CD4-positive, alpha-beta T cell (primary cell): ENCODE measurements at regions of chr19 and their contacts with region 1.

Region 1: GRCh38 chr19:15288146-15288963 is 44.0 kb downstream of the BRD4 start:
- DNase-seq: peak in 1 of 14 experiments; percentile 24
- ATAC-seq: peak; percentile 23
- H3K4me3 ChIP-seq: no peak overlapping the region
- H3K4me3 Mint-ChIP-seq: peak overlapping the region; percentile 68
- H3K27ac ChIP-seq: no peak overlapping the region
- H3K27ac Mint-ChIP-seq: peak overlapping the region; percentile 75
- H3K4me1 ChIP-seq: peaks cover 96% of the 10 kb centered on the region
- H3K4me1 Mint-ChIP-seq: peaks cover 100% of the 10 kb centered on the region
- H3K27me3 ChIP-seq: no peaks in the 10 kb centered on the region
- H3K27me3 Mint-ChIP-seq: no peaks in the 10 kb centered on the region
- CTCF ChIP-seq: no peak

Region 2: DNA sequence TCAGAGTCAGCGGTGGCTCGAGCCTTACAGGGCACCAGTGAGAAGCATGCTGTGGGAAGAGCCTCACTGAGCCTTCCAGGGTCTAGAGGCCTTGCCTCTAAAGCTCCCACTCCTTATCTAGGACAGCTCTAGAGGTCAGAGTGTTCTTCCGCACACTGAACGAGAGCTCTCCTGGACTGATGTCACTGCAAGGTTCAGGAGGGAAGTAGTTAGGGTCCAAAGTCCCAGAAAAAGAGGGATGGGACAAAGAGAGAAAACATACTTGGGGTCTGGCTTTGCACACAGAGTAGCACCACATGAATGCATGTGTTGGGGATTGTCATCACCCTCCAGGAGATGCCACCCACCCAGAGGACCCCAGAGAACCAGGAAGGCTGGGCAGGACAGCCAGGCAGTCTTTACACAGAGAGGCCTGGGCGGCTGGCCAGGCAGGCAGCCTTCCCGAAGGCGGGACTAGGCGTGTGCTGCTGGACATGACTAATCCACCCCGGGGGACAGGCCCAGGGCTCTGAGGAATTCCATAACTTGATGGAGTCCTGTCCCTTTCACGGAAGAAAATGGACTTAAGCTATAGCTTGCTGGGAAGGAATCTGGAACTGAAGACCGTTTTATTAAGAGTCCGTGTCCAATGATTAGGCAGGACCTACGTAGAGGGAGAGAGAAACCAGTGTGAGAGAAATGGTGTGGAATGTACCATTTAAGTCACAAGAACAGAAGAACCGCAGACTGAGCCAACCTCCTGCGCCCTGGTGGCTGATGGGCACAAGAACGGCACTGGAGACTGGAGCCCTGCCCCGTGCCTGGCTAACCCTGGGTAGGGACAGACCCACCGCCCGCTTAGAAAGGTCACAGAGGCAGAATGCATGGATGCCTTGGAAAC is 39.5 kb before region 1 on chr19:
- CTCF ChIA-PET with region 1: no interaction called
- POLR2A ChIA-PET with region 1: no interaction called
- intact Hi-C with region 1: no loop called
- DNase-seq: no peak
- ATAC-seq: no peak
- H3K4me3 ChIP-seq: no peak overlapping the region
- H3K4me3 Mint-ChIP-seq: no peak overlapping the region
- H3K27ac ChIP-seq: no peak overlapping the region
- H3K27ac Mint-ChIP-seq: no peak overlapping the region
- H3K4me1 ChIP-seq: no peaks in the 10 kb centered on the region
- H3K4me1 Mint-ChIP-seq: no peaks in the 10 kb centered on the region
- H3K27me3 ChIP-seq: no peaks in the 10 kb centered on the region
- H3K27me3 Mint-ChIP-seq: no peaks in the 10 kb centered on the region
- CTCF ChIP-seq: no peak

Region 3: DNA sequence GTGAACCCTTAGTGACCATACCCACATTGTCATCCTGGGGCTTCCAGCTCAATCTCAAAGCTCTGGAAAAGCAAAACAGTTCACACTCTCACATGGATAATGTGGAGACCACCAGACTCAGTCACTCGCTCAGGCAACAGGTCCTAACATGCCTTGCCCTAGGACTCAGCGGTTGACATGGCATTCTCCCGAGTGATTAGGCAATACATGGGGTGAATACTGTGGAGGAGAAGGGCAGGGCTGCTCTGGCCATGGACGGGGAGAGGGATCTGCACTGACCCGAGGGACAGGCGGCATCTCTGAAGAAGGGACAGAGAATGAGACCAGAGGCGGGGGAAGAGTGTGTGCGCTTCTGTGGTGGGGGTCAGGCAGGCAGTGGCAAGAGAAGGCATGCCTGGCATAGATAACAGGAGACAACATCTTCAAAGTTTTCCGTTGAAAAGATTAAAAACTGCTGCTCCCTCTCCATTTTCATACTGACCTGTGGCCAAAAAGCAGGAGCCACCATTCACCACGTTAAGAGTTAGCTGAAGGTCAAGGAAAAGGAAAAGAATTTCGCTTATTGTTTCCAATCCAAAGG is 11.6 kb before region 1 on chr19:
- CTCF ChIA-PET with region 1: no interaction called
- POLR2A ChIA-PET with region 1: no interaction called
- intact Hi-C with region 1: no loop called
- DNase-seq: no peak
- ATAC-seq: no peak
- H3K4me3 ChIP-seq: no peak overlapping the region
- H3K4me3 Mint-ChIP-seq: no peak overlapping the region
- H3K27ac ChIP-seq: no peak overlapping the region
- H3K27ac Mint-ChIP-seq: peak overlapping the region; percentile 75
- H3K4me1 ChIP-seq: peaks cover 74% of the 10 kb centered on the region
- H3K4me1 Mint-ChIP-seq: peaks cover 80% of the 10 kb centered on the region
- H3K27me3 ChIP-seq: no peaks in the 10 kb centered on the region
- H3K27me3 Mint-ChIP-seq: no peaks in the 10 kb centered on the region
- CTCF ChIP-seq: no peak

Region 4: GRCh38 chr19:15304140-15304705 is 15.9 kb after region 1 on chr19:
- CTCF ChIA-PET with region 1: interaction called, 4 read pairs
- POLR2A ChIA-PET with region 1: interaction called, 4 read pairs
- intact Hi-C with region 1: loop called (anchors 1 to 2 kb)
- DNase-seq: no peak
- ATAC-seq: peak; percentile 71
- H3K4me3 ChIP-seq: no peak overlapping the region
- H3K4me3 Mint-ChIP-seq: peak overlapping the region; percentile 36
- H3K27ac ChIP-seq: no peak overlapping the region
- H3K27ac Mint-ChIP-seq: peak overlapping the region; percentile 37
- H3K4me1 ChIP-seq: peaks cover 73% of the 10 kb centered on the region
- H3K4me1 Mint-ChIP-seq: peaks cover 76% of the 10 kb centered on the region
- H3K27me3 ChIP-seq: no peaks in the 10 kb centered on the region
- H3K27me3 Mint-ChIP-seq: no peaks in the 10 kb centered on the region
- CTCF ChIP-seq: no peak

Region 5: GRCh38 chr19:15323496-15324227 is 35.3 kb after region 1 on chr19:
- CTCF ChIA-PET with region 1: interaction called, 4 read pairs
- POLR2A ChIA-PET with region 1: no interaction called
- intact Hi-C with region 1: loop called in 1 of 2 experiments (anchors 5 kb)
- DNase-seq: peak in 2 of 14 experiments; percentile 38 to 43
- ATAC-seq: no peak
- H3K4me3 ChIP-seq: no peak overlapping the region
- H3K4me3 Mint-ChIP-seq: peak overlapping the region; percentile 69
- H3K27ac ChIP-seq: no peak overlapping the region
- H3K27ac Mint-ChIP-seq: peak overlapping the region; percentile 61
- H3K4me1 ChIP-seq: peaks cover 80% of the 10 kb centered on the region
- H3K4me1 Mint-ChIP-seq: peaks cover 91% of the 10 kb centered on the region
- H3K27me3 ChIP-seq: no peaks in the 10 kb centered on the region
- H3K27me3 Mint-ChIP-seq: no peaks in the 10 kb centered on the region
- CTCF ChIP-seq: no peak